ENCODE measurements at regions of chr20 and their contacts with region 1.

Region 1: DNA sequence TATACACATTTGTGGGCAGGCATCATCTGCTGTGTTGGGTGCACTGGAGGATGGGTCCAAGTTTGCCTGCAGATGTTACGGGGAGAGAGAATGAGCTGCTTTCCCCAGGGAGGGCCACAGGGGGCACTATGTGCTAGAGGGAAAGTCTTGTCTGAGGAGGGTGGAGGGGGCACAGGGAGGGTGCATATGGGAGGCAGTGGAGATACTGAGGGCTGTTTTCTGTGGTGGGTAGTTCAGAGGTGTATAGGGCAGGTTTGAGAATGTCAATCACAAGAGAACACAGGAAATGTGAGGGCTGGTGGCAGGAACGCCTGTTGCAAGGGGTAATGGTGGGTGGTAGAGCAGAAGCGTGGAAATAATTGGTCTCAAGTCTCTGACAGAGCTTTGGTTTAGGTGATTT is 7.7 kb upstream of the PTPRA start:
- H3K4me3 ChIP-seq: no peak overlapping the region
- H3K27ac ChIP-seq: no peak overlapping the region
- H3K4me1 ChIP-seq: peaks cover 4% of the 10 kb centered on the region
- CTCF ChIP-seq: 0 out of 2 replicates have a peak, but pooled peaks have one; percentile 32

Region 2: GRCh38 chr20:2626853-2627541 is 238.6 kb before region 1 on chr20:
- CTCF ChIA-PET with region 1: no interaction called
- POLR2A ChIA-PET with region 1: no interaction called
- H3K4me3 ChIP-seq: no peak overlapping the region
- H3K27ac ChIP-seq: no peak overlapping the region
- H3K4me1 ChIP-seq: no peaks in the 10 kb centered on the region
- CTCF ChIP-seq: no peak

Region 3: DNA sequence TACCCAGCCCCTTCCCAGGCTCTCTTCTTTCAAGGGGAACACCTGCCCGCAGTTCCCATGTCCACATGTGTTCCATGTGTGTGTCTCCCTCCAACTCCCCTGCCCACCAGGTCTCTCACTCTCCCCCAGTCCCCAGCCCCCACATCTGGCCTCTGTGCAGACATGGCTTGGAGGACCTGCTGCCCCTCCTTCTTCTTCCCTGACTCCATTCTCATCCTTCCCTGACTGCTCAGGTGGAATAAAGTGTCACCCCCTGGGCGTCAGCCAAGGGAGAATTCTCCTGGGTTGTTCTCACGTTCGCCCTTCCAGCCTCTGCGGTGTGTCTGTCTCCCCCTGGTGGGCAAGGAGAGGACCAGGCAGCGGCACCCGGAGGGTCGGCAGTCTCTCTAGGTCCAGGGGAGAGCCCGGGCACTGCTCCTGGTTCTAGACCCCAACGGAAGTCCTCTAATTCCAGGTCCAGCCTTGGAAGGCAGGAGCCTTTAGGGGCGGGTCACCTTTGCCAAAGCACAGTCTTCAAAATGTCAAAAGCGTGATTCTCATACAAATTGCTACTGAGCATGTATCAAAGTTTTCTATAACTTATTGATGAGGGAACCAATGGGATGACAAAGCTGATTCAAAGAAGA is 122.6 kb before region 1 on chr20:
- CTCF ChIA-PET with region 1: no interaction called
- POLR2A ChIA-PET with region 1: no interaction called
- H3K4me3 ChIP-seq: no peak overlapping the region
- H3K27ac ChIP-seq: no peak overlapping the region
- H3K4me1 ChIP-seq: no peaks in the 10 kb centered on the region
- CTCF ChIP-seq: peak; percentile 73

Region 4: DNA sequence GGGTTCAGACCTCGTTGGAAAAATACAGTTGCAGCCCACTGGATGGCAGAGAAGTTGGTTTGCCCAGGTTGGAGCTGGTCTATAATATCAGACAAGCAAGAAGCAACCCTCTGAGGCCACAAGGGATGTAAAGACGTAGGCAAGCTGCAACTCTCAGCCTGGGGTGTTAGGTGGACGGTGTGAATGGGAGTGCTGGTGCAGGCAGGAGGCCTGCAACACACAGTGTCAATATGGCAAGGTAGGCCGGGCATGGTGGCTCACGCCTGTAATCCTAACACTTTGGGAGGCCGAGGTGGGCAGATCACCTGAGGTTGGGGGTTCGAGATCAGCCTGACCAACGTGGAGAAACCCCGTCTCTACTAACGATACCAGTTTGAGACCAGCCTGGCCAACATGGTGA is 14.5 kb before region 1 on chr20:
- CTCF ChIA-PET with region 1: interaction called, 13 read pairs
- POLR2A ChIA-PET with region 1: no interaction called
- H3K4me3 ChIP-seq: no peak overlapping the region
- H3K27ac ChIP-seq: no peak overlapping the region
- H3K4me1 ChIP-seq: no peaks in the 10 kb centered on the region
- CTCF ChIP-seq: no peak

Region 5: DNA sequence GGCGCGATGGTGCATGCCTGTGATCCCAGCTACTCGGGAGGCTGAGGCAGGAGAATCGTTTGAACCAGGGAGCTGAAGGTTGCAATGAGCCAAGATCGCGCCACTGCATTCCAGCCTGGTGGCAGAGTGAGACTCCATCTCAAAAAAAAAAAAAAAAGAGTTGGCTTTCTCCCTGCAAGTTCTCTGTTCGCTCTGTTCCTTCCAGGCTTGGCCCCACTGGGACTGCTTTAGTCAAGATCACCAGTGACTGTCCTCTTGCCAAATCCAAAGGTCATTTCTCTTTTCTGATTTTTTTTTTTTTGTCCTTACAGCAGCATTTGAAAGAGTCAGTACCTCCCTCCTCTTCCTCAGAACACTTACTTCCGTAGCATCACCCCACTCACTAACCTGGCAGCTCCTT is 167.0 kb after region 1 on chr20:
- CTCF ChIA-PET with region 1: no interaction called
- POLR2A ChIA-PET with region 1: no interaction called
- H3K4me3 ChIP-seq: no peak overlapping the region
- H3K27ac ChIP-seq: no peak overlapping the region
- H3K4me1 ChIP-seq: no peaks in the 10 kb centered on the region
- CTCF ChIP-seq: no peak